Right ventricle myocardium inferior (tissue), 1 donor: ENCODE measurements at regions of chr15 and their contacts with region 1.

Region 1: GRCh38 chr15:56918046-56918938 is at the start of gene TCF12:
- DNase-seq: peak; percentile 96
- ATAC-seq: peak; percentile 98
- total RNA-seq, gene TCF12: 46.5 TPM

Region 2: DNA sequence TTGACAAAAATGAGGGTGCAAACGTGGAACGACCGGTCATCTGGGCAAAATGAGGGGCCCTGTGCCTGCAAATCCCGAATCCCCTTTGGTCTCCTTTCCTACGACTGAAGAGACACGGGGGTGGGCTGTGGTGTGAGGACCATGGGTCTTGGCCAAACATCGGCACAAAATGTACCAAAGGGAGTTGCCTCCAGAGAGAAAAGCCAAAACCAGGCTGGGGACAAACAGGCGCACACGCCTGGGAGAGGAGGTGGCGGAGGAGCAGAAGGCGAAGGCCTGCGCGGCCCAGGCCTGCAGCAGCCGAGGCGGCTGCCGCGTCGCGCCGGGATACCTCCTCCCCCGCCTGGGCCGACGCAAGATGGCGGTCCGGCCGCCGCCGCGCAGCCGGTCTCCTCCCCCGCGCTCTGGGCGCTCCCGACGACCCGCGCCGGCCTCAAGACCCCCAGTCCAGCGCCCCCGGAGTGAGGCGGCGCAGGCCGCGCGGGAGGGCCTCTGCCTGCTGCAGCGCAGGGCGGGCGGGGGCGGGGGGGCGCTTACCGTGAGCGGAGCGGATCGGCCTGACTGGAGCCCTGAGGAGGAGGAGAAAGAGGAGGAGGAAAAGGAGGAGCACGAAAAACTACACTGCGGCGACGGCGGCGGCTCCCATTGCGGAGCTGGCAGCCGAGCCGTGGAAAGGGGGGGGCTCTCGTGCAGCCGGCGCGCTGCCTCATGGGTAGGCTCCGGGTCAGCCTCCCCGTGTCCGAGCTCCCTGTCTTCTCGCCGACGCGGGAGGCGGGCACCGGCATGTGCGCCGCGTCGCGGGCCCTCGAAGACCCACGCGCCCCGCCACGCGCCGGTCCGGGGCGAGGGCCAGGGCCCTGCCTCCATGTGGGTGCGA is 185.1 kb before region 1 on chr15 and contains the start of gene ZNF280D:
- intact Hi-C with region 1: loop called (anchors 10 kb)
- DNase-seq: peak; percentile 96
- ATAC-seq: peak; percentile 96
- total RNA-seq, gene ZNF280D: 20.8 TPM

Region 3: GRCh38 chr15:56821721-56822425 is 96.4 kb before region 1 on chr15:
- intact Hi-C with region 1: loop called (anchors 5 kb)
- DNase-seq: no peak
- ATAC-seq: peak; percentile 74

Region 4: DNA sequence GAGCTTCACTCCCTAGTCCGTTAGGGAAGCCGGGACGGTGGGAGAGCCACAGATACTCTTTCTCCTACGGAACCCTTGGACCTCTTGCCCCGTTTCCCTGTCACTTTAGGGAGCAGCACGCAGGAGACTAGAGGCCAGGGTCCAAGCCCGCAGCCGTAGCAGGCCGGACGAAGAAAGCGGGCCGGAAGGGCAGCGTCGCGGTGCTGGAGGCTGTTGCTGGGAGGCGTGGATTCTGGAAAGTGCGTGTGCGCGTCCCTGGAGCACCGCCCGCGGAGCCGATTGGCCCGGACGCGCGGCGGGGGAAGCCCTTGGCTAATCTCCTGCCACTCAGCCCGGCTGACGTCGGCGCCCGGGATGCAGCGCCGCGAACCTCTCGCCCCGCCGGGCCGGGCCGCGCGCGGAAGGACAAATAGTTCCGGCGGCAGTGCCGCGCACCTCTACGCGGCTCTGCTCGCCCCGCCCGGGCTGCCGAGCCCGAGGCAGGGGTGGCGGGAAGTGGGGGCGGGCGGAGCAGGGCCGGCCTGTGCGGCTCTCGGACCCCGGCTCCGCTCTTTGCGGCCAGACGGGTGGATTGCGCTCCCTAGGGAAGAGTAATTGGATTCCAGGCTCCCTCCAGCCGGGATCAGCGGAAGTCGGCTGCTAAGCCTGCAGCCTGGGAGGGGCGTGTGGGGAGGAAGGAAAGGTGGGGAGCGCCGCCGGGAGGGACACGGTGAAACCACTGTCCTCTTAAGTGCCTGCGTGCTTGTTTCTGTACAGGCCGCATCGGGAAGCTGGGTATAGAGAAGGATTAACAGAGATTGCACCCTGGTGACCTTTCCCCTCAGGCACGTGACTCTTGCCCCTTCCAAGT is 31.1 kb before region 1 on chr15:
- intact Hi-C with region 1: loop called (anchors 1 kb)
- DNase-seq: peak; percentile 97
- ATAC-seq: peak; percentile 98

Region 5: GRCh38 chr15:57025264-57025939 is 107.1 kb after region 1 on chr15:
- intact Hi-C with region 1: no loop called
- DNase-seq: no peak
- ATAC-seq: no peak

Region 6: DNA sequence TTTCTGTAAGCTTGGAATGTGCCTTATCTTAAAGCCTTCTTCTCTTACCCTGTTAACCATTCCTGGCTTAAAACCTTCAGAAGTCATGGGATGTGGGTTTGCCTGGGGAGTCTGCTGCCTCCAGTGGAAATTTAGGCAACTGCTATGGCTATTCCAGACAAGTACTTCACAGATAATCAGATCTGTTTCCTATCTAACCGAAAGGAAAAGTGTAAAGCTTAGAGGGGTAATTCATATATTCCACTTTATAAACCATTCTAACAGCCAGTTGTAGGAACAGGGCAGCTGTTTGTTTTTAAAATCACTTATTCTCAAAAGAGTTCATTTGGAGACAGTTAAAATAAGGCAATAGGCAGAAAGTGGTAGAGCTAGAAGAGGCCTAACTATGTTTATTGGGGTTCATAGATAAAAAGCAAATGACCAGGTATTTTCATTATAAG is 220.1 kb after region 1 on chr15:
- intact Hi-C with region 1: loop called (anchors 2 kb)
- DNase-seq: no peak
- ATAC-seq: peak; percentile 79